HEK293 (cell line): ENCODE measurements at regions of chr20 and their contacts with region 1.

Region 1: DNA sequence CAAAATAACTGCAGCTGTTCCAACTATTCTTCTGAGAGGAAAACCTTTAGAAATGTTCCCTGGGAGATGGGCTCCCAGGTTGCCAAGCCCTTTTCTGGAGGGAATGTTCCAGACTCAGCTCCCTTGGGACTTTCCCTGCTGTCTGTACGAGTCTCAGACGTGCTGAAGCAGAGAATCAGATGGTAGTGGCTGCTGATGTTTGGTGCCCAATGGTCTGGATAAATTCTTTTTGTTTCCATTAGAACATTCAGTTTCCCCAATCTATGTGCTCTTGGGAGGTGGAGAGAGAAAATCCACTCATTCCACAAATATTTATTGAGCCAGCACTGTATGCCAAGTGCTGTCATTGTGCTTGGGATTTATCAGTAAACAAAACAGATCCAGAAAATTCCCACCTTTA is 40.0 kb downstream of the SNHG17 start:
- H3K4me3 ChIP-seq: no peak overlapping the region
- H3K27ac ChIP-seq: no peak overlapping the region
- H3K4me1 ChIP-seq: no peaks in the 10 kb centered on the region
- CTCF ChIP-seq: no peak

Region 2: DNA sequence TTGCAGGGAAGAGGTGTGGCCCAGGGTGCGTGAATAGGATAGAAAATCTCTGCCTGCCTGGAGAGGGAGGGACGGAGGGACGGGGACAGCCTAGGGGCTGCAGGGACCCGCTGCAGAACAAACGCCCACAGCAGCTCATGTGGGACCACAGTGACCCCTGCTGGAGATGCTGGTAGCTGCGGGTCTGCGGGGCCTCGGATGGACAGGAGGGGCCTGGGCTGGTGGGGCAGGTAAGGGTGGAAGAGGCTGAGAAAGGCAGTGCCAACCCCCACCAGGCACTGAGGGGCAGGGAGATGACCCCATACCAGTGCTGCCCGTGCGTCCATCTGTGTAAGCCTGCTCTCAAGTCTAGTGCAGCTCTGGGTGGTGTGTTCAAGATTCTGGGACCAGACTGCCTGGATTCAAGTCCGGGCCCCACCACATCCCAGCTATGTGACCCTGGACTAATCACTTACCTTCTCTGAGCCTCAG is 174.0 kb before region 1 on chr20:
- CTCF ChIA-PET with region 1: no interaction called
- POLR2A ChIA-PET with region 1: no interaction called
- H3K4me3 ChIP-seq: no peak overlapping the region
- H3K27ac ChIP-seq: no peak overlapping the region
- H3K4me1 ChIP-seq: no peaks in the 10 kb centered on the region
- CTCF ChIP-seq: peak; percentile 93

Region 3: DNA sequence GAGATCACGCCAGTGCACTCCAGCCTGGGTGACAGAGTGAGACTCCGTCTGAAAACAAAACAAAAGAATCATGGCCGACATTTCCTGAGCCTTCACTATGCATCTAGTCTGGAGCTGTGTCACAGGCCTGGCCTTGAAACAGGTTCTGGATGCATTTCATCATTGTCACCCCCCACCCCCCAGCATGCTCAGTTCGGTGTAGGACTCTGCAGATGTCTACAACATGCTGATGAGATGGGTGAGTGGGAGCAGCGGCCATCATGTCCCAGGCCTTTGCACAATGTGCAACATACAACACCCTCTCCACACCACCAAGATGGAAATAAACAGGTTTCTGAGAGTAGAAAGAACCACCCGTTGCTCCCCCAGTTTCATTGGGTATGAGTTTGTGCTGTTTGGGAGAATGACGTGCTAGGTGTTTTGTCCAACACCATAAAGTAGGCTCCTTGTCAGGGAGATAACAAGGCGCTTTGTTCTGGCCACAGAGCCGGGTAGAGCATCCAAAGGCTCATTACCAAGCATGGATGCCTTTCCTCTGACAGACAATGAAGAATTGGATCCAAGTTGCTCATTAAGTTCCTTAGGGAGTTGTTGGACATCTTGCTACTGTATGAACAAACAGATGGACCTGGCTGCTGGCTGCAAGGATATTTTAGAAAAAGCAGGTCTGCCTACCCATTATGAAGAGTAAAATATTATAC is 17.9 kb after region 1 on chr20:
- CTCF ChIA-PET with region 1: interaction called, 14 read pairs
- POLR2A ChIA-PET with region 1: no interaction called
- H3K4me3 ChIP-seq: no peak overlapping the region
- H3K27ac ChIP-seq: no peak overlapping the region
- H3K4me1 ChIP-seq: no peaks in the 10 kb centered on the region
- CTCF ChIP-seq: no peak